CD4-positive, alpha-beta memory T cell (primary cell): ENCODE measurements at regions of chr19 and their contacts with region 1.

Region 1: GRCh38 chr19:51703575-51704515 is 10.7 kb downstream of the SPACA6 start:
- DNase-seq: peak; percentile 95 to 98 (median 96)
- H3K4me3 ChIP-seq: peak overlapping the region; percentile 42 to 84
- H3K4me3 Mint-ChIP-seq: peak overlapping the region; percentile 80 to 93 (median 88)
- H3K27ac ChIP-seq: peak overlapping the region; percentile 90
- H3K27ac Mint-ChIP-seq: peak overlapping the region; percentile 82 to 95 (median 93)
- H3K4me1 ChIP-seq: peaks cover 28% of the 10 kb centered on the region
- H3K4me1 Mint-ChIP-seq: peaks cover 22 to 55% (median 34%) of the 10 kb centered on the region in 4 donors
- H3K27me3 ChIP-seq: no peaks in the 10 kb centered on the region
- H3K27me3 Mint-ChIP-seq: no peaks in the 10 kb centered on the region

Region 2: DNA sequence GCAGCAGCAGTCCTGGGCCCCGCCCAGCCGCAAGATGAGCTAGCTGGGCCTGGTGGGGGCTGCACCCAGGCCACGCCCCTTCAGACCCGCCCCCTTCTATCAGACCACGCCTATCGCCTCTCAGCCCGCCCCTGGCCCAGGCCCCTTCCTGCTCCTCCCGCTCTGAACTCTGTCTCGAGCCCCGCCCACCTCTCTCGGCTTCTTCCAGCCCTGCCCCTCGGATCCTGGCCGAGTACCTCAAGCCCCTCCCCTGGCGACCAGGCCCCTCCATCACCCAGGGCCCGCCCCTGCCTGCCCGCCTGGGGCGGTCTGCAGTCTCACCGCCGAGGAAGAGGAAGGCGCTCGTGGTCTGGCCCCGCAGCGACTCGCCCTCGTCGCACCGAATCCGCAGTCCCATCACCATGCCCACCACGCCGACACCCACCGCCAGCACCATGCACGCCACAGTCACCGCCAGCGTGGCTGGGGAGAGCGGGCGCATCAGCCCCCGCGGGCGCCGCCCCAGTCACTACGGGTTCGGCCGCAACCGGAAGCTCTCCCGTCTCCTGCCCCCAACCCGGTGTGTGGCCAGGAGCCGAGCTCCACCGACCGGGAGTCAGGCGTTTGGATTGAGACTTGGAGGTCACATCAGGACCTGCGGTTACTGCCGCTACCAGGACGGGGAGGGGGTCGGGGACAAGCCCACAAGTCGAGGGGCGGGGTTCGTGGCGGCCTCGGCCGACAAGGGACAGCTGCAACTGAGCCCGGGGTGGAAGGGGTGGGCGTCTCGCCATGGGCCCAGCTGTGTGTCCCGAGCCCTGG is 336.1 kb before region 1 on chr19:
- CTCF ChIA-PET with region 1: no interaction called
- POLR2A ChIA-PET with region 1: no interaction called
- intact Hi-C with region 1: loop called (anchors 5 kb)
- DNase-seq: peak; percentile 89 to 95 (median 91)
- H3K4me3 ChIP-seq: peak overlapping the region; percentile 83 to 85
- H3K4me3 Mint-ChIP-seq: peak overlapping the region; percentile 92 to 100 (median 98)
- H3K27ac ChIP-seq: peak overlapping the region; percentile 77
- H3K27ac Mint-ChIP-seq: peak overlapping the region; percentile 87 to 98 (median 96)
- H3K4me1 ChIP-seq: peaks cover 67% of the 10 kb centered on the region
- H3K4me1 Mint-ChIP-seq: peaks cover 49 to 88% (median 64%) of the 10 kb centered on the region in 4 donors
- H3K27me3 ChIP-seq: no peaks in the 10 kb centered on the region
- H3K27me3 Mint-ChIP-seq: no peaks in the 10 kb centered on the region

Region 3: GRCh38 chr19:51570962-51571575 is 132.8 kb before region 1 on chr19 and contains the start of gene ZNF175:
- CTCF ChIA-PET with region 1: no interaction called
- POLR2A ChIA-PET with region 1: interaction called, 4 read pairs
- intact Hi-C with region 1: loop called (anchors 5 kb)
- DNase-seq: peak; percentile 71 to 79 (median 74)
- H3K4me3 ChIP-seq: peak within 1 kb of the TSS; percentile 39 to 68
- H3K4me3 Mint-ChIP-seq: peak within 1 kb of the TSS; percentile 94 to 100 (median 96)
- H3K27ac ChIP-seq: no peak within 1 kb of the TSS
- H3K27ac Mint-ChIP-seq: peak within 1 kb of the TSS; percentile 63 to 94 (median 85)
- H3K4me1 ChIP-seq: peaks cover 19% of the 10 kb centered on the region
- H3K4me1 Mint-ChIP-seq: peaks cover 19 to 36% (median 25%) of the 10 kb centered on the region in 4 donors
- H3K27me3 ChIP-seq: no peaks in the 10 kb centered on the region
- H3K27me3 Mint-ChIP-seq: peaks cover 3 to 6% of the 10 kb centered on the region in 2 donors
- total RNA-seq, gene ZNF175: 17.1 to 17.4 TPM

Region 4: DNA sequence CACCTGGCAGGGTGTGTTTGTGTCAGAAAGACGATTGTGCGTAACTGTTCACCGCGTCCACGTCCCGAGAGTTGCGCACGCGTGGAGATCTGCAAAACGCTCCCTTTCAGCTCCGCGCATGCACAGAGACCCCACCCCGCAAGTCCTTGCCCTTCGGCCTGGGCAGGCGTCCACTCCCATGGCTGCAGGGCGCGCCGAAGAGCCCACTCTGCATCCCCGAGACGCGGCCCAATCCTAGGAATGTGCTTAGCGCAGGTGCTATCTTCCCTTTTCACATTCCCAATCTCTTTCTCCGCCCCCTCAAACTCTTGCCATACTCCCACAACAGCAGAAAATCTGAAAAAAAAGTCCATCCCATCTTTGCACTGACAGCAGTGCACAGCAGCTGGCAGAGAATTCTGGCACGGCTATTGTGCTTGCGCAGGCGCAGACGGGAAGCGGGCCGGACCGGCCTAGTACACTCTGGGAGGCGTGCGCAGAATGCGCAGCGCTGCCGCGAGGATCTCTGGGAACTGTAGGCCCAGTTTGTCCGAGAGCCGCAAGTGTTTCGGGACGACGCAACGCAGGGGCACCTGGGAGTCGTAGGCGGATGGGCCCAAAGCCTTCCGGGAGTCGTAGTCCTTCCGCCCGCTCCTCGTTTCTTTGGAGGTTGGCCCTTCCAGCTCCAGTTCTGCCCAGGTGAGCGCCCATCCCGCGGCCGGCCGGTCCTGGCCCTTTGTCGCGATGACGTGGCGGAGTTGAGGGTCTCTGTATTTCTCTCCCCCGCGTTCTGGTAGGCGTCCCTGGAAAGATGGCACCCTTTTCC is 109.7 kb before region 1 on chr19:
- CTCF ChIA-PET with region 1: no interaction called
- POLR2A ChIA-PET with region 1: interaction called, 5 read pairs
- intact Hi-C with region 1: loop called (anchors 1 kb)
- DNase-seq: peak; percentile 92 to 94 (median 93)
- H3K4me3 ChIP-seq: peak overlapping the region; percentile 91 to 93
- H3K4me3 Mint-ChIP-seq: peak overlapping the region; percentile 85 to 100 (median 96)
- H3K27ac ChIP-seq: peak overlapping the region; percentile 58
- H3K27ac Mint-ChIP-seq: peak overlapping the region; percentile 33 to 97 (median 93)
- H3K4me1 ChIP-seq: peaks cover 16% of the 10 kb centered on the region
- H3K4me1 Mint-ChIP-seq: peaks cover 16 to 25% (median 22%) of the 10 kb centered on the region in 4 donors
- H3K27me3 ChIP-seq: no peaks in the 10 kb centered on the region
- H3K27me3 Mint-ChIP-seq: peaks cover 2 to 11% of the 10 kb centered on the region in 2 donors

Region 5: DNA sequence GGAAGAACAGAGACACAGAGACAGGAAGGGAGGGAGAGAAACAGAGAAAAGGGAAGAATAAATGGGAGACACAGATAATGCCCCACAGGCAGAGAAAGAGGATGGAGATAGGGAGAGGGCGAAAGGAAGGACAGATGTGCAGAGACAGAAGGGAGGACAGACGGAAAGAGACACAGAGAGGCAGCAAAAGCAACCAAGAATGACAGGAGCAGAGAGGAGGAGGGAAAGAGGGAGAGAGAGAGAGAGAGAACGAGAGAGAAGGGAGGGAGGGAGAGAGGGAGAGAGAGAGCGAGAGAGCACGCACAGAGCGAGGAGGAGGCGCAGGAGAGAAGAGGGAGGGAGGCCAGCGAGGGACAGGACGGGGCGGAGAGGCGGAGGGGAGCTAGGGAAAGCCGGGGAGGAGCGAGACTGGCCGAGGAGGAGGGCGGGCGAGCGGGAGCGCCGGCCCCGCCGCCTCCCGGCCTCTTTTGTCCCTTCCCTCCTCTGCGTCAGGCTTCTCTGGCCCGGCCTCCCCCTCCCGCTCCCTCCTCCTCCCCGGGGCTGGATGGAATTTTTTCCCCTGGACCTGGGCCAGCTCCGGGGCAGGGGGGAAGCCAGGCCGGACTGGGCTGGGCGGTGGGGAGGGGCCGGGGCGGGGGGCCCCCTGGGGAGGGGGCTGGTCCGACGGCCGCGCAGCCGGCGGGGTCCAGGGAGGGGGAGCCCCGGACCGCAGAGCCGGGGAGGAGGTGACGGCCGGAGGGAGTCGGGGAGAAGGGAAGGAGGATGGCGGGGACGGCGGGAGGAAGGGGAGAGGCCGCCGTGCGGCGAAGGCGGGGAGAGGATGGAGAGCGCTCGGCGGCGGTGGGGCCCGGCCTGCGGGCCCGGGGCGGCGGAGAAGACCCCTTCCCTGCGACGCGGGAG is 14.9 kb before region 1 on chr19:
- CTCF ChIA-PET with region 1: interaction called, 7 read pairs
- POLR2A ChIA-PET with region 1: interaction called, 40 read pairs
- intact Hi-C with region 1: loop called (anchors 1 kb)
- DNase-seq: peak in 1 of 5 donors; percentile 51
- H3K4me3 ChIP-seq: no peak overlapping the region
- H3K4me3 Mint-ChIP-seq: peak overlapping the region; percentile 82 to 93 (median 90)
- H3K27ac ChIP-seq: no peak overlapping the region
- H3K27ac Mint-ChIP-seq: peak overlapping the region; percentile 68 to 93 (median 87)
- H3K4me1 ChIP-seq: peaks cover 6% of the 10 kb centered on the region
- H3K4me1 Mint-ChIP-seq: peaks cover 10 to 31% (median 18%) of the 10 kb centered on the region in 4 donors
- H3K27me3 ChIP-seq: no peaks in the 10 kb centered on the region
- H3K27me3 Mint-ChIP-seq: peaks cover 2 to 3% of the 10 kb centered on the region in 2 donors

Region 6: GRCh38 chr19:52464798-52465470 is 761.1 kb after region 1 on chr19:
- CTCF ChIA-PET with region 1: no interaction called
- POLR2A ChIA-PET with region 1: no interaction called
- intact Hi-C with region 1: no loop called
- DNase-seq: no peak
- H3K4me3 ChIP-seq: no peak overlapping the region
- H3K4me3 Mint-ChIP-seq: peak overlapping the region in 1 of 8 donors; percentile 5
- H3K27ac ChIP-seq: no peak overlapping the region
- H3K27ac Mint-ChIP-seq: no peak overlapping the region
- H3K4me1 ChIP-seq: no peaks in the 10 kb centered on the region
- H3K4me1 Mint-ChIP-seq: no peaks in the 10 kb centered on the region
- H3K27me3 ChIP-seq: no peaks in the 10 kb centered on the region
- H3K27me3 Mint-ChIP-seq: no peaks in the 10 kb centered on the region